GM13977 (cell line): ENCODE measurements at regions of chr12 and their contacts with region 1.

Region 1: DNA sequence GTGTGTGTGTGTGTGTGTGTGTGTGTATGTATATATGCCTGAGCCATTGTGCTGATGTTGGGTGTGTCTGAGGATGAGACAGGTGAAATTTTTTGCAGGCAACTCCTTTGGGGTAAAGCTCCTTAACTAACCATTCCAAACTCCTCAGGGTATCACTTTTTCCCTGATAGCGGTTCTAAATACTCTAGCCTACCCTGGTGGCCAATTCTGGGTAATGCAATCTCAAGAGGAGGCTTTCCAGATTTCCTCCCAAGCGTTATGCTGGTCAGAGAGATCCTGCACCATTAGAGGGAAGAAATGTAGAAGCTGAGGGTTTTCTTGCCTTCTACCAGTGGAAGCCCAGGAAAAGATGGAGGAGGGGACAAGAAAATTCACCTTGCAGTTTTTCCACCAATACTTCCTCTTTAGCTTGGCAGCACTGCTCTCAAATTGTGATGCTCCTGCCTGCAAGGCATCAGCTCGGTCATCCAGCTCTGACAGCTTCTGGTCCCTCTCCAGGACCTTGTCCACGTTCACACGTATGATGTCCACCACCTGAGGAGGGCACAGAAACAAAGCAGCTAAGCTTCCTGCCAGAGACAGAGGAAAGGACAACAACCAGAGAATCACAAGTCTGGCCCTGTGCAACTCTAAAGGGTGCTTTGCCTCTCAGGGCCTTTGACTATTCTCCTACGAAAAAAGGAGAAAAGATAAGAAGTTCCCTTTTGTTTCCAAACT is 4.9 kb downstream of the VAMP1 start:
- DNase-seq: no peak
- CTCF ChIP-seq: peak; percentile 87

Region 2: DNA sequence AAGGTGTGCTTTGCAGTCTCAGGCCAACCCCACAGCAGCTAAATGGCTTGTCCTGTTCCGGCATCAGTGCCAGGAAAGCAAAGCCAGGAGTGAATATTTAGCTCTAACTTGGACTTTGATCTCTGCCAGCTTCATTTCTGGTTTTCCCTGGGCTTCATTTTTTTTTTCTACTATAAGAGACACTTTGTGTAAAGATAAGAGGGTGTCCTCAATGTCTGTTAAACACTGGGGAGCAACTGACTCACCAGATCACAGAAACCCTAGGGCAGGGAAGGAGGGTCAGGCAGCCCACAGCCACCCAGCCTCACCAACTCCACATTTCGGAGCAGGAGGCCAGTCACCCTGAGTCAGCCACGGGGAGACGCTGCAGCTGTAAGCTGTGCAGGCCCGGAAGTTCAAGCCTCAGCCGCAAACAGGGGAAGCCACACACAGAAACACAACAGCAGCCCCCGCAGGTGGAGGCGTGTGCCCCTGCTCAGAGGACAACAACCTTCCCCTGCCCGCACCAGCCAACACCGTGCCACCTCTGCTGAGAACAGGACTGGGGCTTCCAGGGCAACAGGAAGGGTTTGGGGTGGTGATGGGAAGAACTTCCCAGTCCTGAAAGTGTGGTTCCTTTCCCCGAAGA is 130.1 kb before region 1 on chr12:
- in situ Hi-C with region 1: loop called (anchors 10 kb)
- DNase-seq: peak; percentile 91
- CTCF ChIP-seq: peak; percentile 84

Region 3: GRCh38 chr12:6423267-6424007 is 42.2 kb before region 1 on chr12:
- in situ Hi-C with region 1: loop called (anchors 5 kb)
- DNase-seq: peak; percentile 79
- CTCF ChIP-seq: peak; percentile 85